GM12878 (cell line): ENCODE measurements at regions of chrX and their contacts with region 1.

Region 1: GRCh38 chrX:107646735-107647134 is 18.4 kb downstream of the PRPS1 start:
- DNase-seq: no peak
- ATAC-seq: peak; percentile 54; the same call in 2 of the 3 replicates
- H3K4me3 ChIP-seq: no peak overlapping the region
- H3K27ac ChIP-seq: no peak overlapping the region
- H3K4me1 ChIP-seq: no peaks in the 10 kb centered on the region
- H3K27me3 ChIP-seq: no peaks in the 10 kb centered on the region
- CTCF ChIP-seq: no peak
- EP300 ChIP-seq: no peak
- POLR2A ChIP-seq: no peak
- RAD21 ChIP-seq: no peak

Region 2: DNA sequence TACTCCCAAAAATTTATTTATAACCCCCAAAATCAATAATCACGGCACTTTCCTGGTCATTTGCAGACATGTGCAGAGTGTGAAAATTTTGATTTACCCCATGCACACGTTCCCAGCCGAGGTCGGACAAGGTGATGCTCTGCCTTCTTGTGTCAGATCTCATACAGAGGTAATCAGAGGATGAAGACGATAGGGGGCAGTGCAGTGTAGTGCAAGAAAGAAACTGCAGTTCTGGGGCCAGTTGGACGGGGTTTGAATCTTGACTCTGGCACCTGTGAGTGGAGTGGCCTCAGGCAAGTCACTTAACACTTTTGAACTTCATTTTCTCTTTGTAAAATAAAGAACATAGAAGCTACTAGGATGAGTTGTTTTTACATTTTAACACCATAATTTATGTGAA is 108.9 kb before region 1 on chrX:
- CTCF ChIA-PET with region 1: no interaction called
- POLR2A ChIA-PET with region 1: no interaction called
- RAD21 ChIA-PET with region 1: no interaction called
- SMC1A ChIA-PET with region 1: no interaction called
- in situ Hi-C with region 1: no loop called
- intact Hi-C with region 1: loop called (anchors 5 kb)
- DNase-seq: no peak
- ATAC-seq: peak; percentile 80
- H3K4me3 ChIP-seq: no peak overlapping the region
- H3K27ac ChIP-seq: no peak overlapping the region
- H3K4me1 ChIP-seq: no peaks in the 10 kb centered on the region
- H3K27me3 ChIP-seq: no peaks in the 10 kb centered on the region; a peak in 2 of 4 replicates
- CTCF ChIP-seq: peak; percentile 49 to 55 (median 51); a peak in 4 of 6 replicates
- EP300 ChIP-seq: no peak
- POLR2A ChIP-seq: no peak
- RAD21 ChIP-seq: peak; percentile 64

Region 3: DNA sequence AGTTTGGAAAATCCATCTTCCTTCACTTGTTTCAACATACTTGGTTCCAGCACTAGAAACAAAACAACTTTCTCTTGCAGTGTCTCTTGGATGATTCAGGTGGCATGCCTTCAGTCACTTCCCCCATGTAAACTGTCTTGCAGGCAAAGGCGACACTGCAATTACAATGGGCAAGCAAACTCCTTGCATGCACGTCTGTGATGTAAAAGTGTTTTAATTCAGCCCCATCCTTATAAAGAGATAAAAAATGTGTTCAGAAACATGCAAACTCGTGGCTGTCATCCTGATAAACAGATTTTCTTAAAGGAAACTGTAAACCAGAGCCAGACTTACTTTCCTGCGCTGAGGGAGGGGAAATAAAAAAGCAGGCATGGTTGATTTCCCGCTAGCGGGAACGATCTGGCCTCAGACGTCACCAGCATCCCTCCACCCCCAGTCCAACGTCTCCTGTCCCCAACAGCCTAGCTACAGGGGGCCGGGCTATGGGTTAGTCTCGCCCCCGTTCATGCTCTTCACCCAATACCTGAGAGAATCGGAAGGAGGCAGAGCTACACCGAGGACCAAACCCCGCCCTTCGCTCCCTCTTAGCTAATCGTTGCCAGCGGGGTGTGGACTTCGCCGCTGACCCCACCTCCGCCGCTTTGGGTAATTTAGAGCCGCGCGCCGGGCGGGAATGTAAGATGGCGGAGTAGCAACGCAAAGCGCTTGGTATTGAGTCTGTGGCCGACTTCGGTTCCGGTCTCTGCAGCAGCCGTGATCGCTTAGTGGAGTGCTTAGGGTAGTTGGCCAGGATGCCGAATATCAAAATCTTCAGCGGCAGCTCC is 18.7 kb before region 1 on chrX and contains the start of gene PRPS1:
- CTCF ChIA-PET with region 1: interaction called, 11 read pairs
- POLR2A ChIA-PET with region 1: interaction called, 3 read pairs
- RAD21 ChIA-PET with region 1: no interaction called
- SMC1A ChIA-PET with region 1: interaction called, 22 read pairs
- in situ Hi-C with region 1: no loop called
- intact Hi-C with region 1: no loop called
- DNase-seq: peak; percentile 75
- ATAC-seq: peak; percentile 98
- H3K4me3 ChIP-seq: peak within 1 kb of the TSS; percentile 74
- H3K27ac ChIP-seq: peak within 1 kb of the TSS; percentile 73
- H3K4me1 ChIP-seq: no peaks in the 10 kb centered on the region
- H3K27me3 ChIP-seq: no peaks in the 10 kb centered on the region
- CTCF ChIP-seq: no peak
- EP300 ChIP-seq: no peak
- POLR2A ChIP-seq: peak; percentile 83
- RAD21 ChIP-seq: no peak
- polyA plus RNA-seq, gene PRPS1: 31.2 to 31.5 TPM